ENCODE measurements at regions of chr19 and their contacts with region 1.

Region 1: DNA sequence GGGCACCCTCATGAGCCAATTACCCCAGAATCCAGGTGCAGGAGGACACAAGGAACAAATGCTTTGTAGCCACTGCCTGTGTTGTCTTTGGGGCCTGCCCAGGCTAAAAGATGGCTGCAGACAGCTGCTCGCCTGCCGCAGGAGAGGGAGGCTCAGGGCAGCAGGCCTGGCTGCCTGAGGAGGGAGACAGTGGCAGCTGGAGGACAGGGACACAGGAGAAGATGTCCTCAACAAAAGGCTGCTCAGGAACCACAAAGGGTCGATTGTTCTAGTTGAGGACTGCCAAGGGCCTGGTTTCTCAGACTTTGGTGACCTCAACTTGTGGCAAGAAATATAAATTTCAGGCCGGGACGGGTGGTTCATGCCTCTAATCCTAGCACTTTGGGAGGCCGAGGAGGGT is 7.6 kb downstream of the SIRT2 start:
- H3K4me3 ChIP-seq: no peak overlapping the region
- H3K27ac ChIP-seq: no peak overlapping the region
- H3K4me1 ChIP-seq: peaks cover 3% of the 10 kb centered on the region; the same call in 1 of the 2 replicates
- CTCF ChIP-seq: no peak

Region 2: DNA sequence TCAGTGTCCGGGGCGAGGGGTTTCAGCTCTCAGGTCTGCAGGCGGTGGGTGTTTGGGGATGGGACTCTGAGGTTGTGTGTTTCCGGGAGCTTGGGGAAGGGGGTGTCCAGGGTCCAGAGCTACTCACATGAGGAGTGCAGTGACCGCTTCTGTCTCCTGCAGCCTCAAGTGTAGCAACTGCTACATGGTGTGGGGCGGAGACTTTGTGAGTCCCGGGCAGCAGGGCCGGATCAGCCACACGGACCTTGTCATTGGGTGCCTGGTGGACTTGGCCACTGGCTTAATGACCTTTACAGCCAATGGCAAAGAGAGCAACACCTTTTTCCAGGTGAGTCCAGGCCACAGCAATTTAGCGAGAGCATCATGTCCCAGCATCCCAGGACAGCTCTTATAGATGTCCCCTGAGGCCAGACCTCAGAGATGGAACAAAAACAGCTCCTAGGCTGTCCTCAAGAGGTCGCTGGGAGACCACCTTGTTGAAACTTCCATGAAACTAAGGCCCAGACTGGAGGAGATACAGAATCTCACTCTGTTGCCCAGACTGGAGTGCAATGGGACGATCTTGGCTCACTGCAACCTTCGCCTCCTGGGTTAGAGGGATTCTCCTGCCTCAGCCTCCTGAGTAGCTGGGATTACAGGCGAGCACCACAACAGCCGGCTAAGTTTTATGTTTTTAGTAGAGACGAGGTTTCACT is 413.4 kb before region 1 on chr19:
- CTCF ChIA-PET with region 1: interaction called, 12 read pairs
- POLR2A ChIA-PET with region 1: no interaction called
- H3K4me3 ChIP-seq: no peak overlapping the region
- H3K27ac ChIP-seq: no peak overlapping the region
- H3K4me1 ChIP-seq: no peaks in the 10 kb centered on the region
- CTCF ChIP-seq: peak; percentile 77

Region 3: GRCh38 chr19:38799071-38799744 is 92.6 kb before region 1 on chr19:
- CTCF ChIA-PET with region 1: interaction called, 10 read pairs
- POLR2A ChIA-PET with region 1: no interaction called
- H3K4me3 ChIP-seq: no peak overlapping the region
- H3K27ac ChIP-seq: no peak overlapping the region
- H3K4me1 ChIP-seq: no peaks in the 10 kb centered on the region
- CTCF ChIP-seq: no peak

Region 4: GRCh38 chr19:38856813-38857212 is 35.0 kb before region 1 on chr19:
- CTCF ChIA-PET with region 1: interaction called, 33 read pairs
- POLR2A ChIA-PET with region 1: interaction called, 4 read pairs
- H3K4me3 ChIP-seq: no peak overlapping the region
- H3K27ac ChIP-seq: no peak overlapping the region
- H3K4me1 ChIP-seq: peaks cover 6% of the 10 kb centered on the region; the same call in 1 of the 2 replicates
- CTCF ChIP-seq: no peak

Region 5: GRCh38 chr19:38877781-38878574 is 13.8 kb before region 1 on chr19 and contains the start of gene RINL:
- CTCF ChIA-PET with region 1: interaction called, 84 read pairs
- POLR2A ChIA-PET with region 1: interaction called, 3 read pairs
- H3K4me3 ChIP-seq: peak within 1 kb of the TSS; percentile 25
- H3K27ac ChIP-seq: peak within 1 kb of the TSS; percentile 71
- H3K4me1 ChIP-seq: peaks cover 8% of the 10 kb centered on the region
- CTCF ChIP-seq: no peak

Region 6: GRCh38 chr19:38956264-38956663 is 64.5 kb after region 1 on chr19:
- CTCF ChIA-PET with region 1: no interaction called
- POLR2A ChIA-PET with region 1: no interaction called
- H3K4me3 ChIP-seq: no peak overlapping the region
- H3K27ac ChIP-seq: no peak overlapping the region
- H3K4me1 ChIP-seq: no peaks in the 10 kb centered on the region
- CTCF ChIP-seq: no peak

Region 7: GRCh38 chr19:39007091-39007490 is 115.3 kb after region 1 on chr19:
- CTCF ChIA-PET with region 1: no interaction called
- POLR2A ChIA-PET with region 1: no interaction called
- H3K4me3 ChIP-seq: no peak overlapping the region
- H3K27ac ChIP-seq: no peak overlapping the region
- H3K4me1 ChIP-seq: no peaks in the 10 kb centered on the region
- CTCF ChIP-seq: no peak

Region 8: GRCh38 chr19:39104186-39104596 is 212.4 kb after region 1 on chr19:
- CTCF ChIA-PET with region 1: no interaction called
- POLR2A ChIA-PET with region 1: no interaction called
- H3K4me3 ChIP-seq: no peak overlapping the region
- H3K27ac ChIP-seq: no peak overlapping the region
- H3K4me1 ChIP-seq: no peaks in the 10 kb centered on the region
- CTCF ChIP-seq: no peak